ENCODE measurements at regions of chr3 and their contacts with region 1.

Region 1: GRCh38 chr3:128505771-128506170 is 12.8 kb upstream of the GATA2 start:
- DNase-seq: no peak
- H3K4me3 ChIP-seq: no peak overlapping the region
- CTCF ChIP-seq: no peak

Region 2: GRCh38 chr3:128170805-128171516 is 334.8 kb before region 1 on chr3:
- in situ Hi-C with region 1: loop called (anchors 5 kb)
- DNase-seq: peak; percentile 69
- H3K4me3 ChIP-seq: no peak overlapping the region
- CTCF ChIP-seq: peak; percentile 98

Region 3: DNA sequence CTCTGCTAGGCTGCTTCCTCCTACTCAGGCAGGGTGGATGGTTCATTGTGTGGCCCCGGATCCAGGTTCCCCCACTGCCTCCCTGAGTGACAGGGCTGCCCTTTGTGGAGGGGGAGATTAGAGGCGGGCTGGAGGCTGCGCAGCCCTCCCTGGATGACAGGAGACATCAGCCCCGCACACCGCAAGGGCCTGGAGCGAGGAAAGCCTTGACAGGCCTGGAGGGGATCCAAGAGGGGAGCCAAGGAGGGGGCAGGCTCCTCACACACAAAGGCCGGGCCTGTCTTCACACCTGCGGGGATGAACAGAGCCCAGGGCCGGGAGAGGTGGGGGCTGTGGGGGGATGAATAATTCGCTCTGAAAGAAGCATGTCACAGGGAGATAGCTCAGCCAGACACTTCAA is 71.9 kb after region 1 on chr3:
- in situ Hi-C with region 1: loop called (anchors 5 kb)
- DNase-seq: no peak
- H3K4me3 ChIP-seq: no peak overlapping the region
- CTCF ChIP-seq: no peak

Region 4: DNA sequence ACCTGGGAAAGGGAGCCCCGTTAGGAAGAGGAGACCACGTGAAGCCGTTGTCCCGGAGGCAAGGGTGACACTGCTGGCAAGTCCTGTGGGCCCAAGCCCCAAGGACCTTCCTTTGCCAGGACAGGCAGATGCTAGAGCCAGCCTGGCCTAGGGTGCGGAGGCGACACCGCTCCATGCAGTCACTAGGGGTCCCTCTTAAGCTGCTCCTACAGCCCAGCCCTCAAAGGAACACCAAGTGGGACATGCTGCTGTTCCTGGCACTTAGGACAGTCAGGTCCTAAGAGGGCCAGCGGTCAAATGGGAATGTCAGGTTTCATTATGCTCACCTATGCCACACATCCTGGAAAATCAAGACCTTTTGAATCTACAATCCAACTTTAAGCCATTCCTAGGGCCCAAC is 85.2 kb after region 1 on chr3:
- in situ Hi-C with region 1: no loop called
- DNase-seq: no peak
- H3K4me3 ChIP-seq: no peak overlapping the region
- CTCF ChIP-seq: peak; percentile 6

Region 5: GRCh38 chr3:128736601-128737000 is 230.8 kb after region 1 on chr3:
- in situ Hi-C with region 1: no loop called
- DNase-seq: no peak
- H3K4me3 ChIP-seq: no peak overlapping the region
- CTCF ChIP-seq: no peak

Measured in astrocyte of the cerebellum (primary cell).